Lower lobe of right lung (tissue), 2 donors: ENCODE measurements at regions of chr1 and their contacts with region 1.

Region 1: DNA sequence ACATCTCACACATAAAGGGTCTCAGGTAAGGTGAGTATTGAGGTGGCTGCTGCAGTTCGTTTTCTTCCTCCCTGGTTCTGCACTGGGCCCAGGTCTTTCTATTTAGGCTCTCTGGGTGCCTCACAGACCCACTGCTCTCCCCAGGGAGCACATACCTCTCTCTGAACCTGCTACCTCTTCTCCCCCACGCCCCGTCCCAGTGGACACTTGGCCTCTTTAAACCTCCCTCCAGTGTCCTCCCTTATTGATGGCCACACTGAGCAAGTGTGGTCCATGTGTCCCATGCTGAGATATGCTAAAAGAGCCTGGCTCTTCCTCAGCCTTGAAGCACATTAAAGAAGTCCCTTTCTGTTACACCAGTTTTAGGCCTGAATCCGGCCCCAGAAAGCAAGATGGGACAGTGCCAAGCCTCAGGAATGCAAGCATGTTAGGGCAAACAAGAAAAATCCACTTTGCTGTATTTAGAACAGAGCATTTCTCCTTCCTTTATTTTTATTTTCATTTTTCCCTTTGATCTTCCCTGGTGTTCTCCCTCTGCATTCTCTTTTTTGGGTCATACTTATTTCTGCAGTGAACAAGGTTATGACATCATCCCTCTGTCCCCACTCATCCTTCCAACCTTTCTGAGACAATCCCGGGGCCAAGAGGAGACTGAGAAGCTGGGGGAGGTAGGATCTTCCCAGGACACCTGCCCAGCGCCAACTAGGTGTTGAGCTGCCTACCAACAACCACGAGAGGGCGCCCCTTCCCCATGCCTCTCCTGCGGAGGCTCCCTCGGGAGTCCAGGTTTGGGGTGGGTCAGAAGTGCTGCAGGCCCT is 5.0 kb upstream of the CHI3L2 start:
- DNase-seq: peak; percentile 85
- ATAC-seq: peak; percentile 91 to 92
- H3K4me3 ChIP-seq: no peak overlapping the region
- H3K27ac ChIP-seq: peak overlapping the region; percentile 7
- H3K4me1 ChIP-seq: peaks cover 63% of the 10 kb centered on the region
- H3K27me3 ChIP-seq: no peaks in the 10 kb centered on the region
- CTCF ChIP-seq: peak; percentile 82

Region 2: DNA sequence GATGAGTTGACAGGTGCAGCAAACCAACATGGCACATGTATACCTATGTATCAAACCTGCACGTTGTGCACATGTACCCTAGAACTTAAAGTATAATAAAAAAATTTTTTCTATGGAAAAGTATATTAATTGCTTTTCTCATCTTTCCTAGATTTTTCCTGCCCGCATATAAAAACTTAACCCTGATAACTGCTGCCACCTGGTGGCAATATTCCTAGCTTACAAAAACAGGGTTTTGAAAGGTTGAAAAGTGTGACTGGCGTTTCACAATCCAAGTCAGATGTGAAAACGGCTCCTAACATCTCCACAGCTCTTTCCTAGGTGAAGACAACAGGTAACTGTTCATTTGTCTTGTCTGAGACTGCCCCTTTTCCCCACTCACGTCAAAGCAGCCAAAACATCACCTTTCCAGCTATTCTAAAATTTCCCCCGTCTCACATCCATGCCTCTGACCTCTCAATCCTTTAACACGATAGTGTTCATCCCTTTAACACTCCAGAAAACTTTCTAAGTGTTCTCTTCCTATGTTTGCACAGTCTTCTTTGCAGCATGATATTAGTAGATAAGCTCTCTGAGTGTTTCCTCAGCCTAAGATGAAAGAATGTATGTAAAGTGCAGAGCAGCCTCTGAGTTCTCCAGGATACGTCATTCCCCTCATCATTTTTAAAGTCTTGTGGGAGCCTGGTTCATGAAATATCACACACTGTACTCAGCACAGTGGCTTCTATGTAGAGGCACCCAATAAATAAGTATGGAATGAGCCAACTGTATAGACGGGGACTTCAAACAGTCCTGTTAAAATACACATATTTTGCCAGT is 177.5 kb after region 1 on chr1:
- intact Hi-C with region 1: loop called (anchors 10 kb)
- DNase-seq: no peak
- ATAC-seq: peak; percentile 50 to 71
- H3K4me3 ChIP-seq: no peak overlapping the region
- H3K27ac ChIP-seq: no peak overlapping the region
- H3K4me1 ChIP-seq: no peaks in the 10 kb centered on the region
- H3K27me3 ChIP-seq: peaks cover 8% of the 10 kb centered on the region
- CTCF ChIP-seq: peak; percentile 70